Activated CD8-positive, alpha-beta T cell treated with anti-CD3 and anti-CD28 coated beads for 36 hours (primary cell): ENCODE measurements at regions of chr5 and their contacts with region 1.

Region 1: DNA sequence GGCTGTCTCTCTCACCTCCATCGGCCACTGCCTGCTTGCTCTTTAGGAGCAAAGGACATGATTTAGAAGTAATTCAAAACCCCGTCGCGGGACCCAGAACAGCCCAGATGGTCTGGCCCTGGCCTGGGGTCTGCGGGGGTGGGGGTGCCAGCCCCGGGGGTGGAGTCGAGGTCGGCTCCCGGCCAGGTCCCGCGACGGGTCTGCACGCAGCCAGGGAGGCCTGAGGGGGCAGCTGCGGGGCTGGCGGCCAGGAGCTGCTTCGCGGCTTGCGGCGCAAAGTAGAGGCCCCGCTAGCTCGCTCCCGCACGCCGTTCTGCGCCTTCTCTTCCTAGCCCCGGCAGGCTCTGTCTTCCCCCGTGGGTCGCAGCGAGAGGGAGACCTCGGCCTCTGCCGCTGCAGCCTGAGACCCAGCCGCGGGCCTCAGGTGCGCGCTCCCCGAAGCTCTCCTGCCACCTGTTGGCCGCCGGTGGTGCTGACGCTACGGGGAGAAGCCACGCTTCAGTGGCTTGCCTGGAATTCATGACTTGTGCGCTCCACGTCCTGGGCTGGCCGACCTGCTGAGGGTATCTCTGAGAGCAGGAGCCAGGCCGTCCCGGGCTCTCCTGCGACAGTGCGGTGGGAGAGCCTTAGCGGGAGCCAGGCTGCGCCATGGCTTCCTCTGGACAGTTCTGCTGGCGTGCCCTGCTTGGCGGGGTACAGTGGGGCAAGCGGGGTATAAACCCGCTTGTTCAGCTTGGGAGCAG is 157.2 kb upstream of the PITX1 start:
- DNase-seq: peak; percentile 77
- ATAC-seq: peak; percentile 100
- H3K4me3 Mint-ChIP-seq: peak overlapping the region; percentile 63
- H3K27ac Mint-ChIP-seq: no peak overlapping the region
- H3K4me1 Mint-ChIP-seq: peaks cover 5% of the 10 kb centered on the region
- H3K27me3 Mint-ChIP-seq: peaks cover 34% of the 10 kb centered on the region
- CTCF ChIP-seq: peak; percentile 98

Region 2: DNA sequence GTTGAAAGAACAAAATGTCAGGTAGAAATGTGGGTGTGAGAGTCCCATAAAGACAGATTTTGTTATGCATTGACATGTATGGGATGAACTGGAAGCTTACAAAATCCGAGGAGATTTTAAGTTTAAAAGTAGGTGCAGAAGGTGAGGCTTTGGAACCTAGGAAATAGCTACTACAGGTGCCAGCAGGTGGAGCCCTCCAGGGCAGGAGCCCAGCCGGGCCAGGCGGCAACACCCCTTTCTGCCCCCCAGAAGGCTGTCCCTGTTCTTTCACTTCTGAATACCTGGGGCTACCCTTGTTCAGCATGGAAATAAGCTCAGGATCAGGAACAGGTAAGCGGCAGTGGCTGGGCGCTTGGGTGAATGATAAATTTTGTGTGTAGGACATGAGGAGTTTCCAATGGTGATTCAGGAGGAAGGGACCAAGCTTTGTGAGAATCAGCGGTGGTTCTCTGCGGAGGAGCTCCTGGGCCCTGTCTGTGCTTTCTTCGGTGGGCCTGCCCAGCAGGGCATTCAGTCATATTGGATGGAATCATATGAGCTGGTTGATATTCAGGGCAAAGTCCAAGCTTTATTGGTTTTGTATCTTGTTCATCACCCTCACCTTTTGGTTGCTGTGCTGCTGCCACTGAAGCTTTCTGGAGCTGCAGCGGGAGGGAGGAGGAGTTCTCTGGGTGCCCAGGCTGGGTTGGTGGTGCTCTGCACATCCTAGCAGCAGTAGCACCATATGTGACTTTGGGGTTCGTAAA is 274.0 kb before region 1 on chr5:
- CTCF ChIA-PET with region 1: interaction called, 10 read pairs
- POLR2A ChIA-PET with region 1: no interaction called
- intact Hi-C with region 1: loop called (anchors 10 kb)
- DNase-seq: peak; percentile 35
- ATAC-seq: no peak
- H3K4me3 Mint-ChIP-seq: no peak overlapping the region
- H3K27ac Mint-ChIP-seq: no peak overlapping the region
- H3K4me1 Mint-ChIP-seq: peaks cover 23% of the 10 kb centered on the region
- H3K27me3 Mint-ChIP-seq: no peaks in the 10 kb centered on the region
- CTCF ChIP-seq: peak; percentile 35